Endothelial cell of umbilical vein (primary cell): ENCODE measurements at regions of chr17 and their contacts with region 1.

Region 1: GRCh38 chr17:82418001-82418986 is at the starts of genes HEXD and OGFOD3:
- DNase-seq: peak; percentile 81
- H3K4me3 ChIP-seq: peak within 1 kb of the TSS; percentile 58 to 90 (median 70)
- H3K27ac ChIP-seq: no peak within 1 kb of the TSS
- H3K4me1 ChIP-seq: peaks cover 12% of the 10 kb centered on the region
- H3K27me3 ChIP-seq: no peaks in the 10 kb centered on the region
- CTCF ChIP-seq: no peak
- POLR2A ChIP-seq: peak; percentile 76
- total RNA-seq, gene HEXD: 12.8 and 12.9 TPM in 2 replicates
- total RNA-seq, gene OGFOD3: 34.8 and 37.1 TPM in 2 replicates

Region 2: GRCh38 chr17:82037113-82037888 is 381.0 kb before region 1 on chr17 and contains the start of gene DCXR:
- CTCF ChIA-PET with region 1: no interaction called
- POLR2A ChIA-PET with region 1: no interaction called
- dilution Hi-C with region 1: no loop called
- intact Hi-C with region 1: loop called (anchors 10 kb)
- DNase-seq: peak; percentile 97
- H3K4me3 ChIP-seq: peak within 1 kb of the TSS; percentile 58 to 71 (median 69)
- H3K27ac ChIP-seq: peak within 1 kb of the TSS; percentile 36
- H3K4me1 ChIP-seq: peaks cover 9% of the 10 kb centered on the region
- H3K27me3 ChIP-seq: no peaks in the 10 kb centered on the region
- CTCF ChIP-seq: peak; percentile 87 to 92
- POLR2A ChIP-seq: peak; percentile 80
- total RNA-seq, gene DCXR: 75.2 and 93.0 TPM in 2 replicates

Region 3: DNA sequence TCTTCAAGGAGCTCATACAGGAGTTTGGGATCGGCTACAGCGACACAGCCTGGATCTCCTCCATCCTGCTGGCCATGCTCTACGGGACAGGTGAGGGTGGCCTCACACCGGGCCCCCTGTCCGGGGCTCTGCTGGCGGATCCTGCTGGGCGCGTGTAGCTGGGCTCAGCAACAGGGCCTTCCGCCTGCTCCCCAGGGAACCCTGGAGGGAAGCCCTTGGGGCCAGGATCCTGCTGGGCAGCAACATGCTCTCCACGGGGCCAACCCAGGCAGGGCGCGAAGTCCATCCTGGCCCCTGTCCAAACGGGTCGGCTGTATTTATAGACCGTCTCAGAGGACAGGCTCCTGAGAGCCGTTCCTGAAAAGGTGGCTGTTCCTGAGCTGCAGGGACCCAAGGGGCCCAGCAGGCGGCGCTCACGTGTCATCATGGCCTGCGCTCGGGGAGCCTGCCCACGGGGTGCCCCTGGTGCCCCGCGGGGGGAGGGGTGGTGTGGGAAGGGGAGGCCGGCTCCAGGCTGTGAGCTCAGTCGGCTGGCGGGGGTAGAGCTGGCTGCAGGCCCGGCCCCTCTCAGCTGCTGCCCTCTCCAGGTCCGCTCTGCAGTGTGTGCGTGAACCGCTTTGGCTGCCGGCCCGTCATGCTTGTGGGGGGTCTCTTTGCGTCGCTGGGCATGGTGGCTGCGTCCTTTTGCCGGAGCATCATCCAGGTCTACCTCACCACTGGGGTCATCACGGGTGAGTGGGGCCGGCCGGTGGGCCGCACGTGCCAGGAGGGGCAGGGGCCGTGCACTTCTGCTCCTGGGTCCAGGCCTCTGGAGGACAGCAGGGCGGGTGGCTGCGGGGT is 181.9 kb before region 1 on chr17:
- CTCF ChIA-PET with region 1: interaction called, 3 read pairs
- POLR2A ChIA-PET with region 1: no interaction called
- dilution Hi-C with region 1: no loop called
- intact Hi-C with region 1: loop called (anchors 10 kb)
- DNase-seq: peak; percentile 45
- H3K4me3 ChIP-seq: no peak overlapping the region
- H3K27ac ChIP-seq: no peak overlapping the region
- H3K4me1 ChIP-seq: peaks cover 21% of the 10 kb centered on the region
- H3K27me3 ChIP-seq: no peaks in the 10 kb centered on the region
- CTCF ChIP-seq: peak; percentile 80 to 91
- POLR2A ChIP-seq: no peak

Region 4: GRCh38 chr17:82351716-82352488 is 66.4 kb before region 1 on chr17:
- CTCF ChIA-PET with region 1: interaction called, 4 read pairs
- POLR2A ChIA-PET with region 1: no interaction called
- dilution Hi-C with region 1: no loop called
- intact Hi-C with region 1: loop called (anchors 1 kb)
- DNase-seq: peak; percentile 85
- H3K4me3 ChIP-seq: no peak overlapping the region
- H3K27ac ChIP-seq: no peak overlapping the region
- H3K4me1 ChIP-seq: no peaks in the 10 kb centered on the region
- H3K27me3 ChIP-seq: no peaks in the 10 kb centered on the region
- CTCF ChIP-seq: peak; percentile 93 to 96
- POLR2A ChIP-seq: no peak

Region 5: DNA sequence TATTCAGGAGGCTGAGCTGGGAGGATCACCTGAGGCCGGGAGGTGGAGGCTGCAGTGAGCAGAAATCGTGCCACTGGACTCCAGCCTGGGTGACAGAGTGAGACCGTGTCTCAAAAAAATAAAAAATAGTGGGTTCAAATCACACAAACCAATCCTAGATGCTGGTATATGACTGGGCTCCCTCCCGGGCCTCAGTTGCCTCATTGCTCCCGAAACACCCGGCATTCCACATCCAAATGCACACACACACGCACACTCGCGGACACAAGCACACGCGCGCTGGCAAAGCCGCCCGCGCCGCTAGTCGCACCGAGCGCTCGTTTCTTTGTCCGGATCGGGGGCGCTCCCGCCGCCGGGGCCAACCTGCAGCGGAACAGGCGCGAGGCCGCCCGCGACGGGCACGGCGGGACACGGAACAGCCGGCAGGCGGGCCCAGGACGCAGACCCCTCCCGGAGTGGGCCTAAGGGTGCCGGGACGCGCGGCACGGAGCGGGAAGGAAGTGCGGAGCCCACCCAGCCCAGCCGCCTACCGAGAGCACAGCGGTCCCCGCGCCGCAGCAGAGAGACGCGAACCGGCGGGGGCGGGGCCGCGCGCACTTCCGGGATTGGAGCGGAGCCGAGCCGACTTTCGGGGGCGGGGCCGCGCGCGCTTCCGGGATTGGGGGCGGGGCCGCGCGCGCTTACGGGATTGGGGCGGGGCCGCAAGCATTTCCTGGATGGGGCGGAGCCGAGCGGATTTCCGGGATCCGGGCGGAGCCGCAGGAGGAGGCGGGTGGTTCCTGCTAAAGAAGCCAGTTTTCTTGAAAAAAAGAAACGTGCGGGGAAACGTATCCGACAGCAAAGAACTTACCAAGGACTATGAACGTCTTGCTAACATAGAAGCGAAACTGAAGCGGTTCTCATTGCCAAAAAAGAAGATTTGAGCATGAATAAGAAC is 32.1 kb after region 1 on chr17 and contains the start of gene CYBC1:
- CTCF ChIA-PET with region 1: no interaction called
- POLR2A ChIA-PET with region 1: no interaction called
- dilution Hi-C with region 1: no loop called
- intact Hi-C with region 1: loop called (anchors 1 kb)
- DNase-seq: peak; percentile 89
- H3K4me3 ChIP-seq: peak within 1 kb of the TSS; percentile 35 to 78 (median 53)
- H3K27ac ChIP-seq: peak within 1 kb of the TSS; percentile 38
- H3K4me1 ChIP-seq: peaks cover 6% of the 10 kb centered on the region
- H3K27me3 ChIP-seq: no peaks in the 10 kb centered on the region
- CTCF ChIP-seq: no peak
- POLR2A ChIP-seq: no peak
- total RNA-seq, gene CYBC1: 60.6 and 71.8 TPM in 2 replicates

Region 6: GRCh38 chr17:82648166-82648668 is 229.9 kb after region 1 on chr17 and contains the start of gene WDR45B:
- CTCF ChIA-PET with region 1: no interaction called
- POLR2A ChIA-PET with region 1: no interaction called
- dilution Hi-C with region 1: no loop called
- intact Hi-C with region 1: no loop called
- DNase-seq: peak; percentile 95
- H3K4me3 ChIP-seq: peak within 1 kb of the TSS; percentile 14 to 100 (median 49)
- H3K27ac ChIP-seq: peak within 1 kb of the TSS; percentile 71
- H3K4me1 ChIP-seq: peaks cover 6% of the 10 kb centered on the region
- H3K27me3 ChIP-seq: no peaks in the 10 kb centered on the region
- CTCF ChIP-seq: no peak
- POLR2A ChIP-seq: peak; percentile 93
- total RNA-seq, gene WDR45B: 62.0 and 63.8 TPM in 2 replicates